Activated T-helper 1 cell treated with anti-CD3 and anti-CD28 coated beads, Interleukin-12 subunit alpha, Interleukin-12 subunit beta, Interleukin-2, Interleukin-4 antibody, amounts not matched to agents 30 ng/mL and 10 ng/mL and 1 ng/mL, durations not matched to agents 14 hours and 24 hours and 36 hours (primary cell): ENCODE measurements at regions of chr18 and their contacts with region 1.

Region 1: GRCh38 chr18:29123706-29124530 is 947.0 kb upstream of the CDH2 start:
- DNase-seq: no peak
- H3K4me3 Mint-ChIP-seq: no peak overlapping the region
- H3K27ac Mint-ChIP-seq: no peak overlapping the region
- H3K4me1 Mint-ChIP-seq: no peaks in the 10 kb centered on the region
- H3K27me3 Mint-ChIP-seq: no peaks in the 10 kb centered on the region

Region 2: DNA sequence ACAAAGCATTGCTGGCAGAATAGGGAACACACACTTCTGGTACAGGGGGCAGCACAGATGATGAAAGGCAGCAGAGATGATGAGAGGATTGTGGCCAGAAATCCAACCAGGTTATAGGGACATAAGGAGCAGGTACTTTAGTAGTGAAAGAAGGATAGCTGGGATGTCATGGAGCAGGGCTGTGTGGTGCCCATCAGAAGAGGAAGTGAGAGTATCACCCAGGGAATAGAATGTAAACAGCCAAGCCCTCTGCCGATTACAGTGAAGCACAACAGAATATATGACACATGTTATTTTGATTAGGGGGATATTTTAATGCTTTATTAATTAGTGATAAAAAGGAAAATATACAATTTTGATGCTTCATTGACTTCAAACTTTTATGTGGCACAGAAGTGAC is 63.6 kb before region 1 on chr18:
- intact Hi-C with region 1: loop called (anchors 10 kb)
- DNase-seq: no peak
- H3K4me3 Mint-ChIP-seq: no peak overlapping the region
- H3K27ac Mint-ChIP-seq: no peak overlapping the region
- H3K4me1 Mint-ChIP-seq: no peaks in the 10 kb centered on the region
- H3K27me3 Mint-ChIP-seq: no peaks in the 10 kb centered on the region

Region 3: GRCh38 chr18:29218091-29218490 is 94.2 kb after region 1 on chr18:
- intact Hi-C with region 1: no loop called
- DNase-seq: no peak
- H3K4me3 Mint-ChIP-seq: no peak overlapping the region
- H3K27ac Mint-ChIP-seq: no peak overlapping the region
- H3K4me1 Mint-ChIP-seq: no peaks in the 10 kb centered on the region
- H3K27me3 Mint-ChIP-seq: no peaks in the 10 kb centered on the region